PC-9 (cell line): ENCODE measurements at regions of chr5 and their contacts with region 1.

Region 1: DNA sequence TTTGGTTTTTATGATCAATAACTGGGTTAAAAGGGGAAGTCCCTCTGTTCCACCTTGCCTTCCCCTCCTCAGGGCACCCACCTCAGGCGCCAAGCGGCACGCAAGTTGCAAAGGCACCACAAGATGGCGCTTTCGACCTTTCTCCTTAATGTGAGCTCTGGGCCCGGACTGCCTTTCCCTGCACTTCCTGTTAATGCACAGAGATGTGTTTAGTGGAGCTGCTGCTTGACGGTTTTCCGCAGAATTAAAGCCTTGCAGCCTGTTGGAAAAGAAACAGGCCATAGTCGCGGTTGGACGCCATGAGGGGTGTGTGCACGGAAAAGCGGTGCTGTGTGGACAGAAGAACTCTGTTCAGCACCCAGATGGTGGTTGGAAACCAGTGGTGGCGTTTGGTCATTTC is 17.9 kb downstream of the CXCL14 start:
- DNase-seq: peak; percentile 44 to 65
- H3K4me3 ChIP-seq: no peak overlapping the region
- H3K27ac ChIP-seq: no peak overlapping the region
- H3K4me1 ChIP-seq: no peaks in the 10 kb centered on the region
- H3K27me3 ChIP-seq: peaks cover 66% of the 10 kb centered on the region
- CTCF ChIP-seq: peak; percentile 75

Region 2: GRCh38 chr5:135829681-135830383 is 269.0 kb after region 1 on chr5:
- CTCF ChIA-PET with region 1: interaction called, 4 read pairs
- POLR2A ChIA-PET with region 1: no interaction called
- intact Hi-C with region 1: loop called (anchors 5 kb)
- DNase-seq: peak in 1 of 2 experiments; percentile 35
- H3K4me3 ChIP-seq: no peak overlapping the region
- H3K27ac ChIP-seq: no peak overlapping the region
- H3K4me1 ChIP-seq: no peaks in the 10 kb centered on the region
- H3K27me3 ChIP-seq: peaks cover 87% of the 10 kb centered on the region
- CTCF ChIP-seq: peak; percentile 88

Region 3: GRCh38 chr5:136212252-136212721 is 651.4 kb after region 1 on chr5:
- CTCF ChIA-PET with region 1: no interaction called
- POLR2A ChIA-PET with region 1: no interaction called
- intact Hi-C with region 1: loop called (anchors 2 kb)
- DNase-seq: peak in 1 of 2 experiments; percentile 29
- H3K4me3 ChIP-seq: no peak overlapping the region
- H3K27ac ChIP-seq: no peak overlapping the region
- H3K4me1 ChIP-seq: no peaks in the 10 kb centered on the region
- H3K27me3 ChIP-seq: no peaks in the 10 kb centered on the region
- CTCF ChIP-seq: peak; percentile 91